Mammary epithelial cell (primary cell): ENCODE measurements at regions of chr15 and their contacts with region 1.

Region 1: DNA sequence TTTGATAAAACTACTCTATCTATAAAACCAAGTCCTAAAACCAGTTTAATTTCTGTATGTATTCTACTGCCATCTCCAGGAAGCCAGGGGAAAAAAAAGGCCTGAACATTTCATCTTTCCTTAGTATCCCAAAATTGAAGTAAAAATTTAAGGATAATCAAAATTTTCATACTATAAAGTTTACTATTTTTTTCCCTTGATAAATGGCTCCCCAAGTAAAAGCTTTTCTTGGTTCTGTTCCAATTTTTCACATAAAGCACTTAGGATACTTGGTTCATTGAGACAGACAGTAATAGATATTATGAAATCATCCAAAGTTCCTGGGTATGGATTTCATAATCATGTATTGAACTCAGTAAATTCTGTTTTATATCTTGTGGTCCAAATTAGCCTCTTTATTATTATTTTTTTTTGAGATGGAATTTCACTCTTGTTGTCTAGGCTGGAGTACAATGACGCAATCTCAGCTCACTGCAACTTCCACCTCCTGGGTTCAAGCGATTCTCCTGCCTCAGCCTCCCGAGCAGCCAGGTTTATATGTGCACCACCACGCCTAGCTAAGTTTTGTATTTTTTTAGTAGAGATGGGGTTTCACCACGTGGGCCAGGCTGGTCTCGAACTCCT is 34.5 kb downstream of the ICE2 start:
- DNase-seq: peak; percentile 26
- H3K4me3 ChIP-seq: no peak overlapping the region
- H3K27ac ChIP-seq: no peak overlapping the region
- H3K4me1 ChIP-seq: peaks cover 9% of the 10 kb centered on the region
- H3K27me3 ChIP-seq: no peaks in the 10 kb centered on the region
- CTCF ChIP-seq: peak; percentile 60 to 63

Region 2: GRCh38 chr15:59063042-59063441 is 1381.4 kb before region 1 on chr15:
- CTCF ChIA-PET with region 1: no interaction called
- dilution Hi-C with region 1: no loop called
- in situ Hi-C with region 1: no loop called
- intact Hi-C with region 1: no loop called
- DNase-seq: no peak
- H3K4me3 ChIP-seq: no peak overlapping the region
- H3K27ac ChIP-seq: no peak overlapping the region
- H3K4me1 ChIP-seq: no peaks in the 10 kb centered on the region
- H3K27me3 ChIP-seq: no peaks in the 10 kb centered on the region
- CTCF ChIP-seq: no peak

Region 3: GRCh38 chr15:59751552-59752413 is 692.6 kb before region 1 on chr15:
- CTCF ChIA-PET with region 1: no interaction called
- dilution Hi-C with region 1: no loop called
- in situ Hi-C with region 1: no loop called
- intact Hi-C with region 1: loop called (anchors 10 kb)
- DNase-seq: peak; percentile 41
- H3K4me3 ChIP-seq: no peak overlapping the region
- H3K27ac ChIP-seq: no peak overlapping the region
- H3K4me1 ChIP-seq: no peaks in the 10 kb centered on the region
- H3K27me3 ChIP-seq: no peaks in the 10 kb centered on the region
- CTCF ChIP-seq: peak; percentile 48 to 62

Region 4: DNA sequence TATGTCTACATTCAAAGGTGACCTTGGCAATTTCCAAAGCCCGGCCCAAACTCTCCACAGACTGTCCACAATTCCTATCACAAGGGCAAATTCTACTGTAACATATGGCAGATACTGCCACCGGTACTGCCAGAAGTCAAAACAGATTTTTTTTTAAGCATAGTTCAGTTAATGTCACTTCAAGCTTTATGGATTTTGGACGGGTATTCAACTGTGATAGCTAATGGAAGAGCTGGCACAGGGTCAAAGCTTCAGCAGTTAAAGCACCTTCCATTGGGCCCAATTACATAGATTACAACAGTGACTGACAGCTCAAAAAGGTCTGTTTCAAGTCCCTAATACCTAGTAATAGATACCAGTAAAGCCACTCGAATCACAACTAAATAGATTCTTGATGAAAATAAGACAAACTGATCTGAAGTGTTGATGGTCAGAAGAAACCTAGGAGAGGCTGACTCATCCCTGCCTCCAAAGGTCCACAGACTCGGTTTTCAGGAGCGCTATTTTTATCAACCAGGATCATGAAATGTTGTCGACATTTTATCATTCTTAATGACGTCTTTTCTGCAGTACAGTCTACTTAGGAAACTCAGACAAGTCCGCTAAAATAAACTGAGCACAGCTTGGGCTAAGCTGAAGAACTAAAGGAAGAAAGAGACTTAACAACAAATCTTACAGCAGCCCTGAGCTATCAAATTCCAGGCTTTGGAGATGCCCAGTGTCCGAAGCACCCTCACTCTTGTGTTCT is 85.3 kb before region 1 on chr15:
- CTCF ChIA-PET with region 1: no interaction called
- dilution Hi-C with region 1: no loop called
- in situ Hi-C with region 1: no loop called
- intact Hi-C with region 1: loop called (anchors 1 kb)
- DNase-seq: no peak
- H3K4me3 ChIP-seq: no peak overlapping the region
- H3K27ac ChIP-seq: no peak overlapping the region
- H3K4me1 ChIP-seq: peaks cover 19% of the 10 kb centered on the region
- H3K27me3 ChIP-seq: no peaks in the 10 kb centered on the region
- CTCF ChIP-seq: no peak

Region 5: DNA sequence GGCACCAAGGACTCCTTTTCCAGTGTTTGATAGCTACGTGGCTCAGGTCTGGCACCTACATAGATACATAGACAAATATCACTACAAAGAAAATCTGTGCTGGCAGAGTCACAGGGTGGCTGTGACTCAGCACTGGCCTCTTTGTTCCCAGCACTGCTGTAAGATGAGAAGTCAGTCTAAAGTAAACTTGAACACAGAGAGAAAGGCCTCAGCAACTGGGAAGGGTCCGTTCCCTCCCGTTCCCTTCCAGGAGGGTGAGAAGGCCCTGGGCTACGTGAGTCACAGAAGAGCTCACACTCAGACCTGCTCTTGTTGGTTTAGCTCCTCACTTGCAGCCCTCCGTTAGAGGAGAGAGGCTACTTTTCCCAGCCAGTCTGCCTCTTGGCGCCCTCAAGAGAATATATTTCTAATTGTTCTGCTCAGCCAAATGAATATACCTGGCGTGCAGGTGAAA is 69.7 kb before region 1 on chr15:
- CTCF ChIA-PET with region 1: no interaction called
- dilution Hi-C with region 1: no loop called
- in situ Hi-C with region 1: no loop called
- intact Hi-C with region 1: loop called (anchors 5 kb)
- DNase-seq: peak; percentile 96
- H3K4me3 ChIP-seq: no peak overlapping the region
- H3K27ac ChIP-seq: peak overlapping the region; percentile 96
- H3K4me1 ChIP-seq: peaks cover 91% of the 10 kb centered on the region
- H3K27me3 ChIP-seq: no peaks in the 10 kb centered on the region
- CTCF ChIP-seq: no peak